ENCODE measurements at regions of chr9 and their contacts with region 1.

Region 1: GRCh38 chr9:134698587-134699342 is 57.2 kb downstream of the COL5A1 start:
- DNase-seq: peak; percentile 28
- ATAC-seq: peak; percentile 87
- H3K4me3 ChIP-seq: no peak overlapping the region
- H3K27ac ChIP-seq: no peak overlapping the region
- H3K4me1 ChIP-seq: no peaks in the 10 kb centered on the region
- H3K27me3 ChIP-seq: no peaks in the 10 kb centered on the region
- CTCF ChIP-seq: peak; percentile 92

Region 2: DNA sequence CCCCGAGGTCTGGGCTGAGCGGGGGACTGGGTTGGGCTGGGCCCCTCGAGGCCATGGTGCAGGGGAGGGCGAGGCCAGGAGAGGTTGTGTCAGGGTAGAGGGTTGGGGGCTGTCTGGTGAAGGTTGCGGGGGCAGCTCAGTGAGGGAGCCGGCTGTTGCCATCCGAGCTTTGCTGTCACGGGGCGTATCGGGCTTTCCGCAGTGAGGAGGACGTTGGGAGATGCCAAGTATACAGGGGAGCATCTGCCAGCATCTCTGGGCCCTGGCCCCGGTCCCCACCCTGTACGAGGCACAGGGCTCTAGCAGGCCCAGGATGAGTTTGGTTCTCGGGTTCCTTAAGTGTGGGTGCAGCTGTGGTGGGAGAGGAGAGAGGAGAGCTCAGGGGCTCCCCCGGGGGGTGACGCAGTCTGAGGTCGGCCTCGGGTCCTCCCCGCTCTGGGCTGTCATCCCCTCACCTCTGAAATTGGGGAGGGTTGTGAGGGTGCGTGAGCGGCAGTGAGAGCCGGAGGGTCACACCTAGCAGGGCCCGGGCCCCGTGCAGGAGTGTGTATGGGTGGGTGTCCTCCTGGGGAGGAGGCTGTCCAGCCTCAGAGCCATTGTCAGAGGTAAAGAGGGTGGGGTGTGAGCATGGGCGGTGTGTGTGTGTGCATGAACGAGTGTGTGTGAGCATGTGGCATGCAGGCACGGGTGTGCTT is 30.2 kb after region 1 on chr9:
- CTCF ChIA-PET with region 1: interaction called, 13 read pairs
- POLR2A ChIA-PET with region 1: no interaction called
- in situ Hi-C with region 1: no loop called
- intact Hi-C with region 1: no loop called
- DNase-seq: no peak
- ATAC-seq: no peak
- H3K4me3 ChIP-seq: no peak overlapping the region
- H3K27ac ChIP-seq: no peak overlapping the region
- H3K4me1 ChIP-seq: no peaks in the 10 kb centered on the region
- H3K27me3 ChIP-seq: 0 out of 2 replicates have a peak, but pooled peaks cover 2% of the 10 kb centered on the region
- CTCF ChIP-seq: no peak

Region 3: GRCh38 chr9:134738869-134739659 is 40.3 kb after region 1 on chr9:
- CTCF ChIA-PET with region 1: interaction called, 4 read pairs
- POLR2A ChIA-PET with region 1: no interaction called
- in situ Hi-C with region 1: no loop called
- intact Hi-C with region 1: loop called (anchors 2 kb)
- DNase-seq: no peak
- ATAC-seq: peak; percentile 83
- H3K4me3 ChIP-seq: no peak overlapping the region
- H3K27ac ChIP-seq: no peak overlapping the region
- H3K4me1 ChIP-seq: no peaks in the 10 kb centered on the region; the same call in 1 of the 2 replicates
- H3K27me3 ChIP-seq: no peaks in the 10 kb centered on the region
- CTCF ChIP-seq: peak; percentile 86

Region 4: DNA sequence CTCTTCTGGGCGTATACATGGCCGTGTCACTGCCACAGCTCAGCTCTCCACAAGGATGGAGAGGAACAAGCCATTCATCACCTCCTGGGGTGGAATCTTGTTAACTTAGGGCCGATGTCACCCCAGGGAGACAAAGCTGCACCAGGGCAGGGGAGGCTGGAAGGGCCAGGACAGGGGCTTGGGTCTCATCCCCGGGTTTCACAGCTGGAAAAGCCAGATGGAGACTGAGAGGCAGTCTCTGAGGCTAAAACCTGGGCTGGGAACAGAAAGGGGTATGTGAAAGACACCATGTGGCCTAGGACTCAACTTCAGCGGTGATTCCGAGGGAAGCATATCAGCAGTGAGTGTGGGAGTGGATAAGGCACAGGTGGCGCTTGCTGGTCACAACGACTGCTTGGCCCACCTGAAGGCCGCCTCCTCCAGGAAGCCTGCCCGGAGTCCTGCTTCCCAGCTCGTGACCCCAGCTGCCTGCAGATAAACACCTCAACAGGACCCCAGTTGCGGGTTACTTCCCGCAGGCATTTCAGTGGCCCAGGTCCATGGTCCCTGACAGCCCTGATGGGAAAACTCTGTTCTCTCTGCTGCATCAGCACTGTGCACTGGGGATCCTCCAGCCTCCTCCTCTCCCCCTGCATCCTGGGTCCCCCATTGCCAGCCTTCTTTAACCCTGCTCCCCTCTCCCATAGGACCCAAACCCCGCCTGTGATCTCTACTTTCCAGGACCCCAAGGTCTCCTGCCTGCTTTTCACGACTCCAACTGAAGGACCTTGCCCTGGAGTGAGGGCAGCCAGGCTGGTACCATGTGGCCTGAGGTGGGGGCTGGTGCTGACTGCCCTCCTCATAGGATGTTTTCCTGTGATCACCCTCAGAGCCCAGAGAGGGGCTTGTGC is 270.6 kb after region 1 on chr9:
- CTCF ChIA-PET with region 1: no interaction called
- POLR2A ChIA-PET with region 1: no interaction called
- in situ Hi-C with region 1: no loop called
- intact Hi-C with region 1: no loop called
- DNase-seq: no peak
- ATAC-seq: no peak
- H3K4me3 ChIP-seq: no peak overlapping the region
- H3K27ac ChIP-seq: no peak overlapping the region
- H3K4me1 ChIP-seq: no peaks in the 10 kb centered on the region
- H3K27me3 ChIP-seq: peaks cover 5% of the 10 kb centered on the region
- CTCF ChIP-seq: no peak